Gastrocnemius medialis (tissue), 4 donors: ENCODE measurements at regions of chr3 and their contacts with region 1.

Region 1: DNA sequence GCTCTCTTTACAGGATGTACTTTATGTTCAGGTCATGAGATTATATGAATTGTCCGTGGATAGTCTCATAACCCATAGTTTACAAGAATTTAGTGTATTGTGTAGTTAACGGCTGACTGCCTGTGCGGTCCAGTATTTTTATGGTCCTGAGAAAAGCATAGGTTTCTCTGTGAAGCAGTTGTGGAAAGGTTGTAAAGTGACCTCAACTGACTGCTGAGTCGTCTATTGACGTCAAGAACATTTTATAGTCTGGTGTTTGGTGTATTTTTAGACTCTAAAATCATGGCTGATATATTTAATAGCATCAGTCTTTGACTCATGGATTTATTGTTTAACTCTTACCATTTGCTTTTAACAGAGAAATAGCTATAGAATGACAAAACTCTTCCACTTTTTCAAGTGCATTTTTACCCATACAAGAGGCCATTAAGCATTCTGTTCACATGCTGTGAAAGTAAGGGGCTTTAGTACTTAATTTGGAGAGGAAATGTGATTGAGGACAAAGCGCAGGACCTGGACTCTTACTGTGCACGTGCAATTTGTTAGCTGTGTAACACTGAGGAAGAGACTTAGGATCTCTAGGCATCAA is 240.7 kb downstream of the NFKBIZ start:
- DNase-seq: no peak
- ATAC-seq: peak; percentile 87 to 90
- H3K4me3 ChIP-seq: peak overlapping the region in 2 of 4 donors; percentile 3 to 20
- H3K27ac ChIP-seq: peak overlapping the region; percentile 69 to 81 (median 75)
- H3K4me1 ChIP-seq: peaks cover 20 to 28% of the 10 kb centered on the region in 2 donors
- H3K27me3 ChIP-seq: no peaks in the 10 kb centered on the region
- CTCF ChIP-seq: no peak
- POLR2A ChIP-seq: peak in 1 of 2 donors; percentile 30

Region 2: DNA sequence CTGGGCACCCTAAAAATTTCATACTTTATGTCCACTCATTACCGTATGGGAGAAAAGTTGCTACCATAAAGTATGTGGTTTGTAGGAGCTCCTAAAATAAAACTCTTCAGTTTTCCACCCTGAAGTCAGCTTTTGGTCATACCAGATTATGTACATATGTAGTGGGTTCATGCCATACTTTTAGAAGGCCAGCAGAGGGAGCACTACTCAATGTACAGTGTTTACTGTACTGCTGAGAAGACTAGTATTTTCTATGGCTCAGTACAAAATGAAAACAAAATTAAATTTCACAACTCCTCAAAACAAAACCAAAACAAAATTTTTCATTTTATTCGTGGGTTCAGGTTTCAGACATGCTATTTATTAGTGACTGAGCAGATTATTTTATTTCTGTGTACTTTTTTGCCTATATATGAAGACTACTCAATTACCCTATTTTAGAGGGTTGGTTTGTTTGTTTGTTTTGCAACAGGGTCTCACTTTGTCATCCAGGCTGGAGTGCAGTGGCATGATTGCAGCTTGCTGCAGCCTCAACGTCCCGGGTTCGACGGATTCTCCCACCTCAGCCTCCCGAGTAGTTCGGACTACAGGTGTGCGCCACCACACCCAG is 286.7 kb before region 1 on chr3:
- in situ Hi-C with region 1: no loop called
- intact Hi-C with region 1: loop called (anchors 10 kb)
- DNase-seq: peak in 1 of 2 donors; percentile 35
- ATAC-seq: peak; percentile 96
- H3K4me3 ChIP-seq: no peak overlapping the region
- H3K27ac ChIP-seq: peak overlapping the region in 2 of 4 donors; percentile 8 to 42
- H3K4me1 ChIP-seq: peaks cover 0 to 31% of the 10 kb centered on the region in 2 donors
- H3K27me3 ChIP-seq: no peaks in the 10 kb centered on the region
- CTCF ChIP-seq: peak; percentile 67 to 86 (median 77)
- POLR2A ChIP-seq: no peak